ENCODE measurements at regions of chr5 and their contacts with region 1.

Region 1: DNA sequence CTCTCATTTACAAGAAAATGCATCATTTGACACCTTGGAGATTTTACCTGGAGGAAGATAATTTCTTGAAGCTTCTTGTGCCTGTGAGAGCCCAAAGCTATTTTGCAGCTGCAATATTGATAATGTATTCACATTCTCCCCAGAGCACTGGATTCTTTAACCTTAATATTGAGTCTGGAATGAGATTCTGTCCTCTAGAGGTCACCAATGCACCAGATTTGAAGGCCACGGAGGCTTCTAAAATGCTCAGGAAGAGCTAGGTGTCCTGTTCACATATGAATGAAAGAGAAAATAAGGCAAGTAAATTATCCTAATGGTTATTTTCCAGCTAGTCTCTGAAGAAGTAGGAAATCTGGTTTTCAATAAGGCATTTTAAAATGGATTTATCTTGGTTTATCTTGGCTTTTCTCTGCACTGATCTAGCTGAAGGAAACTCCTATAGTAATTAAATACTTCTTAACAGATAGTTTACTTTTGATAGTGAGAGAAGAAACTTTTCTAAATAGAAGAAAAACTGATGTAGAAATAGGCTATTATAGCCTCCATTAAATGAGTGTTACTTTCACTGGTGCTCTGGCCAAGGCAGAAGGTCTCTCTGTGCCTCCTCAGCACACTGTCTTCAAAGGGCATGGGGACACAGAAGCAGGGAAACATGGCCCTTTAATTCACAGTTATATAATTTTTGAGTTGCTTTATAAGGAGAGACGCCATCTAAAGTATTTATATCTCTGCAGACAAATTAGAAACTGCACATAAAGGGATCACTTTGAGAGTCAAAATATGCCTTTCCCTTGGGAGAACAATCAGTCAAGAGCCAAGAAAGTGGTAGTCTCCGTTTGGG is 297.0 kb upstream of the ACTBL2 start:
- DNase-seq: peak; percentile 35 to 73
- ATAC-seq: peak; percentile 72 to 90; a peak in 4 of 6 replicates
- H3K4me3 ChIP-seq: no peak overlapping the region
- H3K27ac ChIP-seq: peak overlapping the region; percentile 29 to 74; a peak in 5 of 6 replicates
- H3K4me1 ChIP-seq: peaks cover 53% of the 10 kb centered on the region
- CTCF ChIP-seq: peak; percentile 89
- EP300 ChIP-seq: no peak
- POLR2A ChIP-seq: no peak
- RAD21 ChIP-seq: peak; percentile 96

Region 2: DNA sequence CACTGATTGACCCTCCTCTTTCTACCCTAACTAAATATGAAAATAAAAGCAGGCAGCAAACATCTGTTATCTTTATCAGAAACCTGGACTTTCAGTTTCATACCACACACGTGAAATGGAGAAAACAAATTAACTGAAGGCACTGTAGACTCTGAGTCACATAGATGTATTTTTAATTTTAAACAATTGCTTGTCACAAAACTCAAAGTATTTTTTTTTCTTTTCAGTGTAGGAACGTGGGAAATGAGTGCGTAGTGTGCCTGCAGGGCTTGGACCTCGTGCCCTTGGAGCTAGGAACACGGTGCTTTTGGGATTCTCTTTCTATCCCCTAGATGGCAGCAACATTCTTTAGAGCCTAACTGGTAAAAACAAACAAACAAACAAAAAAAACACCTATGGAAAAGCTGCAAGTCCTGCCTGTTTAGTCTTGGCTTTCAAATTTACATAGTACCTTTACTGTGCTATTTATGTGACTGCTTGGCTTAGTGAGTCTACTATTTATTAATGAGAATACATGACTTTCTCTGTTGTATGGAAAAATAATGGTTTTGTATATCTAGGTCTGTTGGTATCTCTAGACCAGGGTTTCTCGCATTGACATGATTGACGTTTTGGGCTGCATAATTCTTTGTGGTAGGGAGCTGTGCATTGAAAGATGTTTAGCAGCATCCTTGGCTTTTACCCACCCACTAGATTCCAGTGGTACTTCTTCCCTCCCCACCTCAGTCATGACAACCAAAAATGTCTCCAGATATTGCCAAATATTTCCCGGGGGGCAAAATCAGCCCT is 280.1 kb before region 1 on chr5:
- CTCF ChIA-PET with region 1: interaction called, 119 read pairs
- POLR2A ChIA-PET with region 1: interaction called, 3 read pairs
- DNase-seq: peak; percentile 47 to 74
- ATAC-seq: peak; percentile 85; a peak in 5 of 6 replicates
- H3K4me3 ChIP-seq: peak overlapping the region; percentile 23; the same call in 1 of the 3 replicates
- H3K27ac ChIP-seq: peak overlapping the region; percentile 57 to 66
- H3K4me1 ChIP-seq: peaks cover 21% of the 10 kb centered on the region
- CTCF ChIP-seq: peak; percentile 92
- EP300 ChIP-seq: no peak
- POLR2A ChIP-seq: no peak
- RAD21 ChIP-seq: peak; percentile 96

Region 3: DNA sequence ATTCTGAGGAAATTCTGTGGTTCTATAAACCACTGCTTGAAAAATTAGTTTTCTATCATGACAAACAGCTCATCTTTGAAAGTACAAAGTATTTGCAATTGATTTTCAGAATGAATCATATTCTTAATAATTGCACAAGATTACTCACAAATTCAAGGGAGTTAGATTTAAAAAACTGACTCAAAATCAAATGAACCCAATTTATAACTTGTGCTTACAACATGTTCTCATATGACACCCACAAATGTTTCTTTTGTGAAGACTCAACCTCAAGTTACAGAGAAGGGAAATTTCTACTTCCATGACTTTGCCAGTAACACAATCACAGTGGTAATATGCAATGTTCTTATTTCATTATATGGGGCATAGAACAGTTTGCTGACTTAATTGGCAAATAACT is 25.0 kb before region 1 on chr5:
- CTCF ChIA-PET with region 1: interaction called, 13 read pairs
- POLR2A ChIA-PET with region 1: no interaction called
- DNase-seq: no peak
- ATAC-seq: no peak
- H3K4me3 ChIP-seq: no peak overlapping the region
- H3K27ac ChIP-seq: no peak overlapping the region
- H3K4me1 ChIP-seq: no peaks in the 10 kb centered on the region
- CTCF ChIP-seq: no peak
- EP300 ChIP-seq: no peak
- POLR2A ChIP-seq: no peak
- RAD21 ChIP-seq: no peak

Region 4: GRCh38 chr5:57878301-57878722 is 98.7 kb after region 1 on chr5:
- CTCF ChIA-PET with region 1: interaction called, 30 read pairs
- POLR2A ChIA-PET with region 1: no interaction called
- DNase-seq: no peak
- ATAC-seq: no peak
- H3K4me3 ChIP-seq: no peak overlapping the region
- H3K27ac ChIP-seq: no peak overlapping the region
- H3K4me1 ChIP-seq: no peaks in the 10 kb centered on the region
- CTCF ChIP-seq: no peak
- EP300 ChIP-seq: no peak
- POLR2A ChIP-seq: no peak
- RAD21 ChIP-seq: no peak

Region 5: GRCh38 chr5:58447226-58447625 is 667.6 kb after region 1 on chr5:
- CTCF ChIA-PET with region 1: interaction called, 14 read pairs
- POLR2A ChIA-PET with region 1: interaction called, 3 read pairs
- DNase-seq: no peak
- ATAC-seq: peak in 1 of 2 experiments; percentile 3; a peak in 2 of 6 replicates
- H3K4me3 ChIP-seq: no peak overlapping the region
- H3K27ac ChIP-seq: peak overlapping the region in 1 of 2 experiments; percentile 43; a peak in 1 of 6 replicates
- H3K4me1 ChIP-seq: peaks cover 3% of the 10 kb centered on the region; the same call in 2 of the 3 replicates
- CTCF ChIP-seq: no peak
- EP300 ChIP-seq: no peak
- POLR2A ChIP-seq: no peak
- RAD21 ChIP-seq: no peak